ENCODE measurements at regions of chr3 and their contacts with region 1.

Region 1: GRCh38 chr3:97821810-97822775 is at the start of gene CRYBG3:
- DNase-seq: peak; percentile 64 to 93 (median 81)
- ATAC-seq: peak; percentile 98
- H3K4me3 ChIP-seq: peak within 1 kb of the TSS; percentile 83
- H3K4me3 Mint-ChIP-seq: peak within 1 kb of the TSS; percentile 93 to 98 (median 95)
- H3K27ac ChIP-seq: peak within 1 kb of the TSS; percentile 52
- H3K27ac Mint-ChIP-seq: peak within 1 kb of the TSS; percentile 76 to 98 (median 87)
- H3K4me1 ChIP-seq: peaks cover 0 to 6% of the 10 kb centered on the region in 2 donors
- H3K4me1 Mint-ChIP-seq: peaks cover 14 to 36% (median 21%) of the 10 kb centered on the region in 7 donors
- H3K27me3 ChIP-seq: peaks cover 0 to 3% of the 10 kb centered on the region in 2 donors
- H3K27me3 Mint-ChIP-seq: peaks cover 4 to 29% (median 26%) of the 10 kb centered on the region in 5 donors
- total RNA-seq, gene CRYBG3: 1.8 to 11.2 (median 5.1) TPM

Region 2: DNA sequence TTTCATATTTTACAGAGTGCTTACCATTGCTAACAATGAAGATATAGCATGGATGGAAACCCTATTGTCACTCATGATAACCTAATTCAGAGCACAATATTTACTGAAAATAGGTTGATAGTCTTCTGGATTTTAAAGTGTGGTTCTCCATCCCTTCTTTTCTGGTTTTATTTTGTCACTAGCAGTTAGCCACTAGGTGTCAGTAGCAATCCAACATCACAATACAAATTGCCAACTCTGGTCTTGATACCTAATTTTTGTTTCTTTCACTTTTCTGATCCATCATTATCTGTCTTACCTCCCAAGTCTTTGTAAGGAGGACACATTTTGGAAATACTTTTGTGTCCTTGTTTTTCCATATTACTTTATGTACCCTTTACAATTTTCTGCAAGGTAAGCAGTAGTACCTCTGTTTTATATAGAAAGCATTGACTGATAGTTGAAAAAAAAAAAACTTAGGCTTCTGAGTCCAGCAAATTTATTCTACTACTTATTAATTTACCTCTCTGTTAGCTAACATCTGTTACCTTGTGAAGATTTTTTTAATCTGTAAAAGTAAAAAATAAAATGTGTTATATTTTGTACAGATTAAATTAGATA is 28.6 kb before region 1 on chr3:
- CTCF ChIA-PET with region 1: interaction called, 3 read pairs
- POLR2A ChIA-PET with region 1: no interaction called
- intact Hi-C with region 1: loop called (anchors 1 kb)
- DNase-seq: peak in 7 of 9 donors; percentile 30 to 67 (median 61)
- ATAC-seq: peak; percentile 80
- H3K4me3 ChIP-seq: no peak overlapping the region
- H3K4me3 Mint-ChIP-seq: no peak overlapping the region
- H3K27ac ChIP-seq: no peak overlapping the region
- H3K27ac Mint-ChIP-seq: no peak overlapping the region
- H3K4me1 ChIP-seq: no peaks in the 10 kb centered on the region
- H3K4me1 Mint-ChIP-seq: peaks cover 0 to 3% (median 0%) of the 10 kb centered on the region in 7 donors
- H3K27me3 ChIP-seq: no peaks in the 10 kb centered on the region
- H3K27me3 Mint-ChIP-seq: no peaks in the 10 kb centered on the region

Region 3: DNA sequence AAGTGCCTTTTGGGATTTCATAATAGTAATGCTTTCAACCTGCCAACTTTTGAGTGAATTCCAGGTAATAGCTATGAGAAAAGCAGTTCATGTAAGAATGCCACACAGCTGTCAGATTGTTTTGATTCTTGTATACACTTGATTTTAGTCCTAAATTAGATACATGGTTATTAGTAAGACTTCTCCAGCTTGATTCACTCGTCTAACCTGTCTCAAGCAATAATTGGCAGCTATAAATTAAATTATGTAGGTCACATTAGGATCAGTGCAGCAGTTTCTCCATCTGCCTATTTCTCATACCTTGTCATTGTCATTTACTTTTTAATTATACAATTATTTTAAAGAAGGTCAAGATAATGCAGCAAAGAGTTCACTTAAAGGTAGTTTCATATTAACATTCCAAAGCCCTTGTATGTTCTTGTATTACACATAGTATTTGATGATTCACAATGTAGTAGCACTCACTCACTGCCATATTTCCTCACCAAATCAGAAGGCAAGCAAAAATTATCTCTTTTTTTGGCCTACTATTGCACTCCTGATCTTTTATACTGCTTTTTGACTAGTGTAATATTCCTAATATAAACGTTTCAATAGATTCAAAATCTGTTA is 11.2 kb before region 1 on chr3:
- CTCF ChIA-PET with region 1: no interaction called
- POLR2A ChIA-PET with region 1: no interaction called
- intact Hi-C with region 1: no loop called
- DNase-seq: no peak
- ATAC-seq: no peak
- H3K4me3 ChIP-seq: no peak overlapping the region
- H3K4me3 Mint-ChIP-seq: no peak overlapping the region
- H3K27ac ChIP-seq: no peak overlapping the region
- H3K27ac Mint-ChIP-seq: no peak overlapping the region
- H3K4me1 ChIP-seq: no peaks in the 10 kb centered on the region
- H3K4me1 Mint-ChIP-seq: peaks cover 0 to 13% (median 0%) of the 10 kb centered on the region in 7 donors
- H3K27me3 ChIP-seq: no peaks in the 10 kb centered on the region
- H3K27me3 Mint-ChIP-seq: peaks cover 0 to 28% (median 9%) of the 10 kb centered on the region in 5 donors

Region 4: GRCh38 chr3:97910931-97911351 is 88.8 kb after region 1 on chr3:
- CTCF ChIA-PET with region 1: no interaction called
- POLR2A ChIA-PET with region 1: interaction called, 6 read pairs
- intact Hi-C with region 1: loop called in 1 of 2 experiments (anchors 1 kb)
- DNase-seq: peak in 6 of 9 donors; percentile 10 to 54 (median 32)
- ATAC-seq: peak; percentile 89
- H3K4me3 ChIP-seq: peak overlapping the region; percentile 2
- H3K4me3 Mint-ChIP-seq: peak overlapping the region in 9 of 10 donors; percentile 66 to 89 (median 84)
- H3K27ac ChIP-seq: peak overlapping the region; percentile 48
- H3K27ac Mint-ChIP-seq: peak overlapping the region; percentile 65 to 98 (median 95)
- H3K4me1 ChIP-seq: peaks cover 17 to 18% of the 10 kb centered on the region in 2 donors
- H3K4me1 Mint-ChIP-seq: peaks cover 15 to 30% (median 21%) of the 10 kb centered on the region in 7 donors
- H3K27me3 ChIP-seq: no peaks in the 10 kb centered on the region
- H3K27me3 Mint-ChIP-seq: no peaks in the 10 kb centered on the region

Region 5: GRCh38 chr3:98022978-98023820 is 201.1 kb after region 1 on chr3:
- CTCF ChIA-PET with region 1: interaction called, 4 read pairs
- POLR2A ChIA-PET with region 1: no interaction called
- intact Hi-C with region 1: loop called (anchors 1 kb)
- DNase-seq: peak; percentile 72 to 96 (median 85)
- ATAC-seq: peak; percentile 85
- H3K4me3 ChIP-seq: no peak overlapping the region
- H3K4me3 Mint-ChIP-seq: peak overlapping the region in 3 of 10 donors; percentile 0 to 58 (median 8)
- H3K27ac ChIP-seq: no peak overlapping the region
- H3K27ac Mint-ChIP-seq: peak overlapping the region in 7 of 9 donors; percentile 2 to 66 (median 20)
- H3K4me1 ChIP-seq: peaks cover 0 to under 1% of the 10 kb centered on the region in 2 donors
- H3K4me1 Mint-ChIP-seq: peaks cover 2 to 27% (median 10%) of the 10 kb centered on the region in 7 donors
- H3K27me3 ChIP-seq: no peaks in the 10 kb centered on the region
- H3K27me3 Mint-ChIP-seq: peaks cover 0 to 5% (median 0%) of the 10 kb centered on the region in 5 donors

Region 6: DNA sequence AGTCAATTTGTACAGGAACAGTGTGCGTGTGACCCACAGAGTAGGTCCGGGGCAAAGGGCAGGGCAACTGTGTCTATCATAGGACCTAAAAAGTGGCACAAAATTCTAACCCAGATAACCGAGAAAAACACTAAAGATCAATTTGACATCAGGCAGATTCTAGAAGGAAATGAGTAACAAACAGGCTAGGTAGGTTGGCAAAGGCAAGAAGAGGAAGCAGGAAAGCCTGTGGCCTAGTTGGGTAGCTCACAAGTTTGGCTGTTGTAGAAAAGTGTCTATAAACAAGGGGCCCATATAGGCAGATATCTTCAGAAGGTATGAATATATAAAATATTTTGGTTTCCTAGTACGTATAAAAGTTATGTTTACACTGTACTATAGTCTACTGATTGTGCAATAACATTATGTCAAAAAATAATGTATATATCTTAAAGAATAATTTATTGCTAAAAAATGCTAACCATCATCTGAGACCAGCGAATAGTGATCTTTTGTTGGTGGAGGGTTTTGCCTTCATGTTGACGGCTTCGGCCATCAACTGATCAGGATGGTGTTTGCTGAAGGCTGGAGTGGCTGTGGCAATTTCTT is 627.6 kb after region 1 on chr3:
- CTCF ChIA-PET with region 1: no interaction called
- POLR2A ChIA-PET with region 1: no interaction called
- intact Hi-C with region 1: no loop called
- DNase-seq: no peak
- ATAC-seq: no peak
- H3K4me3 ChIP-seq: no peak overlapping the region
- H3K4me3 Mint-ChIP-seq: no peak overlapping the region
- H3K27ac ChIP-seq: no peak overlapping the region
- H3K27ac Mint-ChIP-seq: no peak overlapping the region
- H3K4me1 ChIP-seq: no peaks in the 10 kb centered on the region
- H3K4me1 Mint-ChIP-seq: peaks cover 0 to 5% (median 0%) of the 10 kb centered on the region in 7 donors
- H3K27me3 ChIP-seq: no peaks in the 10 kb centered on the region
- H3K27me3 Mint-ChIP-seq: peaks cover 5 to 22% (median 10%) of the 10 kb centered on the region in 5 donors

Region 7: GRCh38 chr3:99817437-99818240 is 1995.5 kb after region 1 on chr3 and contains the start of gene CMSS1:
- CTCF ChIA-PET with region 1: no interaction called
- POLR2A ChIA-PET with region 1: no interaction called
- intact Hi-C with region 1: loop called in 1 of 2 experiments (anchors 5 kb)
- DNase-seq: peak; percentile 96 to 98 (median 97)
- ATAC-seq: peak; percentile 94
- H3K4me3 ChIP-seq: peak within 1 kb of the TSS; percentile 80
- H3K4me3 Mint-ChIP-seq: peak within 1 kb of the TSS; percentile 84 to 99 (median 95)
- H3K27ac ChIP-seq: peak within 1 kb of the TSS; percentile 90
- H3K27ac Mint-ChIP-seq: peak within 1 kb of the TSS; percentile 93 to 100 (median 100)
- H3K4me1 ChIP-seq: peaks cover 18 to 22% of the 10 kb centered on the region in 2 donors
- H3K4me1 Mint-ChIP-seq: peaks cover 19 to 62% (median 41%) of the 10 kb centered on the region in 7 donors
- H3K27me3 ChIP-seq: no peaks in the 10 kb centered on the region
- H3K27me3 Mint-ChIP-seq: no peaks in the 10 kb centered on the region
- total RNA-seq, gene CMSS1: 14.9 to 47.7 (median 18.2) TPM